ENCODE measurements at regions of chr17 and their contacts with region 1.

Region 1: GRCh38 chr17:70225276-70225675 is 55.9 kb downstream of the KCNJ2 start:
- DNase-seq: no peak
- ATAC-seq: no peak

Region 2: GRCh38 chr17:70265471-70265870 is 40.2 kb after region 1 on chr17:
- intact Hi-C with region 1: loop called (anchors 5 kb)
- DNase-seq: no peak
- ATAC-seq: no peak

Measured in Right ventricle myocardium inferior (tissue), 1 donor.